GM10248 (cell line): ENCODE measurements at regions of chr2 and their contacts with region 1.

Region 1: DNA sequence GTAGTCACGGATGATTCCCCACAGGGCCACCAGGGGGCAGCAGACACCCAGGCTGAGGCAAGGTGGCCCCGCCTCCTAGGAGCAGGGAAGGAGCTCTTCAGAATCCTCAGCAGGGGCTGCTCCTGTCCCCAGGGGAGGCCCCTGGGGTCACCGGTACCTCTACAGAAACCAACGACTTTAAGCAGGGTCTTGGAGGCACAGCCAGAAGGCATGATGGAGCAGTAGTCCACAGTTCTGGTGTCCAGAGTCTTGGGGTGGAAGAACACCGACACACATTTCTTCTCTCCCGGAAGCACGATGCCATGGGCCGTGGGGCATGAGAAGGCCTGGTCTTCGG is 11.5 kb downstream of the CFAP65 start:
- DNase-seq: peak; percentile 90
- CTCF ChIP-seq: peak; percentile 95

Region 2: GRCh38 chr2:218811382-218811781 is 218.4 kb before region 1 on chr2:
- CTCF ChIA-PET with region 1: no interaction called
- POLR2A ChIA-PET with region 1: no interaction called
- DNase-seq: no peak
- CTCF ChIP-seq: no peak

Region 3: GRCh38 chr2:218979846-218980734 is 49.7 kb before region 1 on chr2:
- CTCF ChIA-PET with region 1: interaction called, 13 read pairs
- POLR2A ChIA-PET with region 1: no interaction called
- DNase-seq: peak; percentile 86
- CTCF ChIP-seq: peak; percentile 98

Region 4: GRCh38 chr2:219002395-219003266 is 27.2 kb before region 1 on chr2:
- CTCF ChIA-PET with region 1: interaction called, 19 read pairs
- POLR2A ChIA-PET with region 1: no interaction called
- DNase-seq: peak; percentile 72
- CTCF ChIP-seq: peak; percentile 57

Region 5: DNA sequence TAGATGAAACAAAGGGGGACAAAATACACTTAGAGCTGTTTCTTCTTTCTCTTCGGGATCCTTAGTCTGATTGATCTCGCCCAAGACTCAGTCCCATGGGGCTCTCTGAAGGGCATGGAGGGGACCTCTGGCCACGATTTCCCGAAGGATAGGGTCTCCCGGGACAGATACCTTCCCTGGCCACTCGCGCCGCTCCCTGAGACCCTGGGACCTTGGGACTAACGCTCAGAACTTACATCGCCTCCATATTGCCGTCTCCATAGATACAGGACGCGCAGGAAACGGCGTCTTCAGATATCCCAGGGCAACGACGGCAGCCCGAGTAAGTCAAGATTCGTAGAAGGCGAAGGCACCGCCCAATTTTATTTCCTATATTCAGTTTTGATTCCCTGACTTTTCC is 11.5 kb after region 1 on chr2 and contains the start of gene CFAP65:
- CTCF ChIA-PET with region 1: interaction called, 17 read pairs
- POLR2A ChIA-PET with region 1: no interaction called
- DNase-seq: no peak
- CTCF ChIP-seq: no peak

Region 6: DNA sequence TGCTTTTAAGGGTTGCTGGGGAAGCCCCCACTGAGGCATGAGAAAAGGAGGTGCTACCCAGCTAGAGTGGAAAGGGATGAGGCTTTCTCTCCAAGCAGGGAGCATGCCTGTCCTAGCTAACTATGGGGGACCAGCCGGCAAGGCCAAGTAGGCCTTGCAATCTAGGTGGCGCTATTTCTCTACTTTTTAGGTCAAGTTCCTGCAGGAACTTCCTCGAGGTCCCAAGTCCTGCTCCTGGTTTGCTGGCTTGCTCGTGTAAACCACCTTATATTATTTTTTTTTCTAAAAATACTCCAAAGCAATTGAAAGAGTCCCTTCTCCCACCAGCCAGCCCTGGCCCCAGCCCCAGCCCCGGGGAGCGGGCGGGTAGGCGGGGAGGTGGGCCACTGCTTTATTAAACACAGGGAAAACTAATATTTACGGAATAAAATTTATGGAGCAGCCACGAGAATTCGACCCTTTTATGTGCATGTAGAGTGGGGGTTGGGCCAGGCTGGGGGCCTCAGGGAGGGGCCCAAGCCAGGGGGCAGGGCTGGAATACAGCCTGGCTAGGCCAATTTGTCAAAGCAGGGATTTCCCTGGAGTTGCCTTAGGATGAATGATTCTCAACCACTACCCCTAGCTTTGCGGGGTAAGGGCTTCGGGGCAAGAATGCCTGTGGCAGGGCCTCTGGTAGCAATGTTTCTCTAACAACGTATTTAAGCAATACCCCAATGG is 43.8 kb after region 1 on chr2:
- CTCF ChIA-PET with region 1: interaction called, 27 read pairs
- POLR2A ChIA-PET with region 1: no interaction called
- DNase-seq: peak; percentile 67
- CTCF ChIP-seq: peak; percentile 55

Region 7: DNA sequence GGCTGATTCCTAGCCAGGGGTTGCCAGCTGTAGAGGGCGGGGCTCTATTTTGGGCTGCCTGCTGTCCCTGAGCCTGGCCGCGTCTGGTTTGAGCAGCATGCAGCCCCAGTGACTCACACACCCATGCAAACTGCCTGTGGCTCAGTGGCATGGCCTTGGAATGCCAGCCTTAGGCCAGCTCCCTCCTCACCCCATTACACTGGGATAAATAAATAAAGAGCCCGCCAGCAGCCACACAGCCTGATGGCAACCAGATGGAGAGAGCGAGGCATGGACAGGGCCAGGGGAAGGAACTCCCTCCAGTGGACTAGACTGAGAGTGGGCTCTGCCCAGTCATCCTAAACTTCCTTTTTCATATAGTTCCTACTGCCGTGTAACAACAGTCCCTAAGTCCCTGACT is 112.5 kb after region 1 on chr2:
- CTCF ChIA-PET with region 1: interaction called, 14 read pairs
- POLR2A ChIA-PET with region 1: no interaction called
- DNase-seq: no peak
- CTCF ChIP-seq: no peak